ENCODE measurements at regions of chr15 and their contacts with region 1.

Region 1: GRCh38 chr15:59528965-59529402 is 82.6 kb upstream of the GCNT3 start:
- DNase-seq: peak; percentile 80
- H3K4me3 ChIP-seq: no peak overlapping the region
- H3K27ac ChIP-seq: no peak overlapping the region
- H3K4me1 ChIP-seq: no peaks in the 10 kb centered on the region
- H3K27me3 ChIP-seq: no peaks in the 10 kb centered on the region
- CTCF ChIP-seq: peak; percentile 86
- EP300 ChIP-seq: no peak
- RAD21 ChIP-seq: peak; percentile 96

Region 2: DNA sequence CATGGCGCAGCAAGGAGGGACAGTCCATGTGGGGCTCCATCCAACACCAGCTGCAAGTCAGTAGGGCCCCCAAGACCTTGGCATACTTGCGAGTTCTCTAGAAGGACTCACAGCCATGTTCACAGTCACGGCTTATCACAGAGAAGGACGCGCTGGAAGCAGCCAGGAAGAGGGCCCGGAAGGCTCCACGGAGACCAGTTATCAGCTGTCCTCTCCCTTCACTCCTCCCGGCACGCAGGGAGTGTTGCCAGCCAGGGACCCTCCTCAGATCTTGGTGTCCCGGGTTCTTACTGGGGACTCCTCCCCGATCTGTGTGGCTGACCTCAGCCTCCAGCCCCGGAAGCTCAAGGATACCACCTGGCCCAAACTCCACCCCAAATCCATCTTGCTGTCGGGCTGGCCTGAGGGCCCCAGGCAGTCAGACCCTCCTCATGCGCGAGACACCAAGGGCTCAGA is 663.5 kb before region 1 on chr15:
- CTCF ChIA-PET with region 1: no interaction called
- POLR2A ChIA-PET with region 1: no interaction called
- DNase-seq: no peak
- H3K4me3 ChIP-seq: no peak overlapping the region
- H3K27ac ChIP-seq: no peak overlapping the region
- H3K4me1 ChIP-seq: peaks cover 0 to 2% of the 10 kb centered on the region in 2 experiments; a peak in 1 of 4 replicates
- H3K27me3 ChIP-seq: no peaks in the 10 kb centered on the region
- CTCF ChIP-seq: no peak
- EP300 ChIP-seq: no peak
- RAD21 ChIP-seq: no peak

Region 3: GRCh38 chr15:58957101-58957973 is 571.6 kb before region 1 on chr15:
- CTCF ChIA-PET with region 1: interaction called, 16 read pairs
- POLR2A ChIA-PET with region 1: no interaction called
- DNase-seq: peak; percentile 57
- H3K4me3 ChIP-seq: no peak overlapping the region
- H3K27ac ChIP-seq: no peak overlapping the region
- H3K4me1 ChIP-seq: peaks cover 0 to 11% of the 10 kb centered on the region in 2 experiments; a peak in 1 of 4 replicates
- H3K27me3 ChIP-seq: no peaks in the 10 kb centered on the region
- CTCF ChIP-seq: peak; percentile 83
- EP300 ChIP-seq: no peak
- RAD21 ChIP-seq: peak; percentile 72

Region 4: GRCh38 chr15:59174835-59175831 is 353.9 kb before region 1 on chr15:
- CTCF ChIA-PET with region 1: interaction called, 11 read pairs
- POLR2A ChIA-PET with region 1: no interaction called
- DNase-seq: peak; percentile 64
- H3K4me3 ChIP-seq: no peak overlapping the region
- H3K27ac ChIP-seq: peak overlapping the region in 1 of 2 experiments; percentile 57; a peak in 3 of 4 replicates
- H3K4me1 ChIP-seq: peaks cover 12 to 25% of the 10 kb centered on the region in 2 experiments; a peak in 3 of 4 replicates
- H3K27me3 ChIP-seq: no peaks in the 10 kb centered on the region
- CTCF ChIP-seq: peak; percentile 63
- EP300 ChIP-seq: no peak
- RAD21 ChIP-seq: peak; percentile 75

Region 5: GRCh38 chr15:59516655-59517461 is 12.1 kb before region 1 on chr15:
- CTCF ChIA-PET with region 1: interaction called, 47 read pairs
- POLR2A ChIA-PET with region 1: no interaction called
- DNase-seq: no peak
- H3K4me3 ChIP-seq: no peak overlapping the region
- H3K27ac ChIP-seq: no peak overlapping the region
- H3K4me1 ChIP-seq: peaks cover 0 to 2% of the 10 kb centered on the region in 2 experiments; a peak in 1 of 4 replicates
- H3K27me3 ChIP-seq: no peaks in the 10 kb centered on the region
- CTCF ChIP-seq: no peak
- EP300 ChIP-seq: no peak
- RAD21 ChIP-seq: no peak

Region 6: GRCh38 chr15:59632714-59633113 is 103.7 kb after region 1 on chr15:
- CTCF ChIA-PET with region 1: interaction called, 34 read pairs
- POLR2A ChIA-PET with region 1: no interaction called
- DNase-seq: no peak
- H3K4me3 ChIP-seq: no peak overlapping the region
- H3K27ac ChIP-seq: no peak overlapping the region
- H3K4me1 ChIP-seq: no peaks in the 10 kb centered on the region
- H3K27me3 ChIP-seq: no peaks in the 10 kb centered on the region
- CTCF ChIP-seq: peak; percentile 35
- EP300 ChIP-seq: no peak
- RAD21 ChIP-seq: peak; percentile 32; the same call in 1 of the 2 replicates

Region 7: DNA sequence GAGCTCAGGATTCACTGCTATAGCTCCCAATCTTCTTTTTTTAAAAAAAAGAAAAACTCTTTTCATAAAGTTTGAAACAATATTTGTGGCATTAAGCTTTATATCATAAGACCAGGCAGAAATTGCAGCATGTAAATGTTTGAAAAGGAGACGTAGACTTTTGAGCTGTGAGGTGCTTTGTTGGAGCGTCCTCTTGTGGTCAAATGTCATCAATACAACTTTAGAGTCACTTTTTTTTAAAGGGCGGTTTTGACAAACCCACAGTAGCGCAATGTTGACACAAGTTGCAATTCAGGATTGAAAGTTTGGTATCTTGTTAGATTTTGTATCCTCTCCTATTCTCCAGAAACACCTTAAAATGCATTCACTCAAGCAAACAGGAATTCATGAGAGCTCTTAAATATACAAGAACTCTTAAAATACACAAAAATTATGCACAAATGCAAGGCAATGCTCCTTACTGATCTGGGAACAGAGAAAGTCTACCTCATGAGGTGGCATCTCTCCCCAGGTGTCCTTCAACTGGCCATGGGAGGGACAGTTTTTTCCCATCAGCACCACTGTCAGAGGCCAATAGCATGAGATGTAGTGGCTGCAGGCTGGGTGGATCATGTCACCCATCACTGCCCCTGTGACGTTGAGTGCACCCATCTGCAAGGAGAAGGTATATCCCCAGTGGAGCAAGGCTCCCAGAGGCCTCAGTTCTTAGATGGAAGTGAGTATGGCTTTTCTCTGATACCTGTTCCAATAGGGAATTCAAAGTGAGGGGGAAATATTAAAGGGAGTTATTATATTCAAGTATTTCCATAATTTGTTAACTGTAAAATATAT is 798.1 kb after region 1 on chr15:
- CTCF ChIA-PET with region 1: interaction called, 14 read pairs
- POLR2A ChIA-PET with region 1: no interaction called
- DNase-seq: peak; percentile 40
- H3K4me3 ChIP-seq: no peak overlapping the region; a peak in 1 of 4 replicates
- H3K27ac ChIP-seq: no peak overlapping the region
- H3K4me1 ChIP-seq: peaks cover 0 to 9% of the 10 kb centered on the region in 2 experiments; a peak in 2 of 4 replicates
- H3K27me3 ChIP-seq: peaks cover 28% of the 10 kb centered on the region; the same call in 1 of the 2 replicates
- CTCF ChIP-seq: peak; percentile 95
- EP300 ChIP-seq: no peak
- RAD21 ChIP-seq: peak; percentile 96

Measured in SK-N-SH (cell line).